Activated CD8-positive, alpha-beta T cell treated with anti-CD3 and anti-CD28 coated beads for 36 hours (primary cell): ENCODE measurements at regions of chr20 and their contacts with region 1.

Region 1: GRCh38 chr20:43456809-43457639 is 672 bp upstream of the SRSF6 start:
- DNase-seq: peak; percentile 94
- ATAC-seq: peak; percentile 81
- H3K4me3 Mint-ChIP-seq: peak overlapping the region; percentile 93
- H3K27ac Mint-ChIP-seq: peak overlapping the region; percentile 99
- H3K4me1 Mint-ChIP-seq: peaks cover 28% of the 10 kb centered on the region
- H3K27me3 Mint-ChIP-seq: peaks cover 4% of the 10 kb centered on the region
- CTCF ChIP-seq: no peak

Region 2: DNA sequence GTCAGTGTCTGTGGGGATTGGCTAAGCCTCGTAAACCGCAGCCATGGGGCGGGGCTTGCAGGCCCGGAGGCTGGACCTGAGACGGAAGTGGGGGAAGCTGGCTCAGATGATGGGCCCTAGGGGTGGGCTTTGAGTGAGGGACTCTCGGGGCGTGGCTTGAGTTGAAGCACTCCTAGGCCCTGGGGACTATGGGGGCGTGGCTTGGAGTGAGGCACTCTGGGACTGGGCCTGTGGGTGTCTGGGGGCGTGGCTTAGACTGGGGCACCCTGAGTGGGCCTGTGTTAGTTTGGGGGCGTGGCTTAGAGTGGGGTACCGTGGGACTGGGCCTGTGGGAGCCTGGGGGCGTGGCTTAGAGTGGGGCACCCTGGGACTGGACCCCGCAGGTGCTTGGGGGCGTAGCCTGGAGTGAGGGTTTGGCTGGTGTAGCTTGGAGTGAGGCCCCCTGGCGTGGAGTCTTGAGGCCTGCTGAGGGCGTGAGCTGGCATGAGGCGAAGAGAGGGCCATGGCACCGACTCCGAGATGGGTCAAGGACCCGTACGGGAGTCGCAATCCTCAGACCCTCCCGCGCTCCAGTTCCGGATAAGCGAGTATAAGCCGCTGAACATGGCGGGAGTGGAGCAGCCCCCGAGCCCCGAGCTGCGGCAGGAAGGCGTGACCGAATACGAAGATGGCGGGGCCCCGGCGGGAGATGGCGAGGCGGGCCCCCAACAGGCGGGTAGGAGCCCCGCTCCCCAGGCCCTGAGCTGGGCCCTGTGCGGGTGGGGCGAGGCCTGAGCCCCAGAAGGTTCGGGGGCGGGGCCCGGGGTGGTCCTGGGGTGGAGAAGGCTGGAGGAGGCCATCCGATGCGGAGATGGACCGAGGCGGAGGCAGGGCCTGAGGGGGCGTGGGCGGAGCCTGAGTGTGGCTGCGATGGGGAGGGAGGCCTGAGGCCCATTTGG is 57.3 kb after region 1 on chr20:
- CTCF ChIA-PET with region 1: no interaction called
- POLR2A ChIA-PET with region 1: interaction called, 25 read pairs
- intact Hi-C with region 1: no loop called
- DNase-seq: peak; percentile 98
- ATAC-seq: peak; percentile 95
- H3K4me3 Mint-ChIP-seq: peak overlapping the region; percentile 91
- H3K27ac Mint-ChIP-seq: peak overlapping the region; percentile 93
- H3K4me1 Mint-ChIP-seq: peaks cover 9% of the 10 kb centered on the region
- H3K27me3 Mint-ChIP-seq: peaks cover 3% of the 10 kb centered on the region
- CTCF ChIP-seq: no peak

Region 3: DNA sequence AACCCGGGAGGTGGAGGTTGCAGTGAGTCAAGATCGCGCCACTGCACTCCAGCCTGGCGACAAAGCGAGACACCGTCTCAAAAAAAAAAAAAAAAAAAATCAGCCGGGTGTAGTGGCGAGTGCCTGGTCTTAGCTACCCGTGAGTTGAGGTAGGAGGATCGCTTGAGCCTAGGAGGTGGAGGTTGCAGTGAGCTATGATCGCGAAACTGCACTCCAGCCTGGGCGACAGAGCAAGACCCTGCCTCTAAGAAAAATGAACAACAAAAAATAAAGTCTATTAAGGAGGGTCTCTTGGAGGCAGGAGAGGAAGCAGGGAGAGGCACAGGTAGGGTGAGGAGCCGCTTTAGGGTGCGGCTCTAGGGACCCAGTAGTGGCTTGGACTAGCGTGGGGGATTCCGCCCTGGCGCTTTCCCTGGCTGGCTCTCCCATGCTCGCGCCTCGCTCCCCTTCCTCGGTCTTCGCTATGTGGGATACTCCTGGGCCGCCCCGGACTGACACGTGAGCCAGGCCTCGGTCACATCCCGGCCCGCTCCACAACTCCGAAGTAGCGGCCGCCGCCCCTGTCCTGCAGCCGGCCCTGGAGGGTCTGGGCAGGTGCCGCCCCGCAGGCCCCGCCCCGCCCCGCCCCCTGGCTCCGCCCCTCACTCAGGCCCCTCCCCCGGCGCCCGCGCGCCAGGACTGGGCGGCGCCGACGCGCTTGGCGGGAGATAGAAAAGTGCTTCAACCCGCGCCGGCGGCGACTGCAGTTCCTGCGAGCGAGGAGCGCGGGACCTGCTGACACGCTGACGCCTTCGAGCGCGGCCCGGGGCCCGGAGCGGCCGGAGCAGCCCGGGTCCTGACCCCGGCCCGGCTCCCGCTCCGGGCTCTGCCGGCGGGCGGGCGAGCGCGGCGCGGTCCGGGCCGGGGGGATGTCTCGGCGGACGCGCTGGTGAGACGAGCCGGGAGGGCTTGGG is 209.6 kb after region 1 on chr20 and contains the start of gene MYBL2:
- CTCF ChIA-PET with region 1: no interaction called
- POLR2A ChIA-PET with region 1: interaction called, 10 read pairs
- intact Hi-C with region 1: no loop called
- DNase-seq: peak; percentile 74
- ATAC-seq: peak; percentile 95
- H3K4me3 Mint-ChIP-seq: peak within 1 kb of the TSS; percentile 81
- H3K27ac Mint-ChIP-seq: peak within 1 kb of the TSS; percentile 88
- H3K4me1 Mint-ChIP-seq: peaks cover 10% of the 10 kb centered on the region
- H3K27me3 Mint-ChIP-seq: peaks cover 11% of the 10 kb centered on the region
- CTCF ChIP-seq: no peak
- total RNA-seq, gene MYBL2: 93.6 to 96.4 TPM